Ascending aorta (tissue), 2 donors: ENCODE measurements at regions of chr2 and their contacts with region 1.

Region 1: DNA sequence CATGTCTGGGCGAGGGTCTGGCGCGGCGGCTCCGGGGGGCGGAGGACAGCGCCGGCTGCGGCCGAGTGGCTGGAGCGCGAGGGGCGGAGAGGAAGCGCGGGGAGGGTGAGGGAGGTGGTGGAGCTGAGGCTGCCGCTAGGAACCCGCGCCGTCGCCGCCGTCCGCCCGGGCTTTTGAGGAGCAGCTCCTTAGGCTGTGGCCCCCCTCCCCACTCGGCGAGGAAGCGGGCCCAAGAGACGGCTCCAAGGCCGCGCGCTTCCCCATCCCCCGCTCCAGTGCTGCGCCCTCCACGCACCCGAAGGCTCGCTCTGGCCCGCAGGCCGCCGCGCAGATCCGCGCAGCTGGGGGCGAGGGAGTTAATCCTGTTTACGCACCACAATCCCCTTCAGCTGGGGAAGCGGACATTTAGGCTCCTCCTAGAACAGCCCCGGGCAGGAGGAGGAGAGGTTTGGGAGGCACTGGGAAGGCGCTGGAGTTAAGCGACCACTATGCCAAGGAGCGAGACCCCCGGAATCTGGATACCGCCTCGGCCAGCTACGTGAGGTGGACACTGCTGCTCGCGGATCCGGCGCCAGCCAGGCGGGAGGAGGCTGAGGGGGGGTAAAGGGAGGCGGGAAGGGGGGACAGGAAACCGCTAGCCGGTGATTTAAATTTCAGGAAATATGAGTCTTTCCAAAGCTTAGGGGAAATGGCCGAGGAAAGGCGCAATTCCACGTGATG is at the start of gene CNRIP1:
- DNase-seq: peak in 1 of 2 donors; percentile 83
- H3K4me3 ChIP-seq: peak within 1 kb of the TSS; percentile 68 to 90
- H3K27ac ChIP-seq: peak within 1 kb of the TSS; percentile 94 to 95
- H3K4me1 ChIP-seq: peaks cover 0 to 7% of the 10 kb centered on the region in 2 donors
- H3K27me3 ChIP-seq: no peaks in the 10 kb centered on the region
- CTCF ChIP-seq: no peak
- total RNA-seq, gene CNRIP1: 37.7 TPM

Region 2: GRCh38 chr2:68263632-68264031 is 55.9 kb before region 1 on chr2:
- intact Hi-C with region 1: no loop called
- DNase-seq: no peak
- H3K4me3 ChIP-seq: no peak overlapping the region
- H3K27ac ChIP-seq: no peak overlapping the region
- H3K4me1 ChIP-seq: no peaks in the 10 kb centered on the region
- H3K27me3 ChIP-seq: no peaks in the 10 kb centered on the region
- CTCF ChIP-seq: no peak

Region 3: DNA sequence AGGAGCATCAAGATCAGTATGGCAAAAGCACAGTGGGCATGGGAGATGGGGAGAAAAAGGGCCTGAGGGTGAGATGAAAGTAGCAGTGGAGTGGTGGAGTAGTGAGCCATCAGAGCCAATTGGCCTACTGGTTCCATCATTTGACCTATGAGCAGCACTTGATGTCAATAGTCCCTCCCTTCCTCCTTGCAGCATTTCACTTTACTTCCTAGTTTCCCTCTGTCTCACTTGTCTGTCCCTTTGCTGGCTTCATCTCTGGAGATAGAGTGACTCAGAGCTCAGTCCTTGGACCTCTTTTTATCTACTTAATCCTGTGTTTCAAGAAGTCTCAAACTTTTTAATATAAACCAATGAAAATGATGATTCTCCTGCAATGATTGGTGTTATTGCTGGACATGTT is 115.4 kb after region 1 on chr2:
- intact Hi-C with region 1: loop called (anchors 5 kb)
- DNase-seq: no peak
- H3K4me3 ChIP-seq: no peak overlapping the region
- H3K27ac ChIP-seq: peak overlapping the region in 1 of 2 donors; percentile 80
- H3K4me1 ChIP-seq: peaks cover 0 to 9% of the 10 kb centered on the region in 2 donors
- H3K27me3 ChIP-seq: no peaks in the 10 kb centered on the region
- CTCF ChIP-seq: no peak